Calu3 (cell line): ENCODE measurements at regions of chr10 and their contacts with region 1.

Region 1: GRCh38 chr10:124741281-124741921 is 2.8 kb downstream of the FAM53B start:
- DNase-seq: peak; percentile 70
- H3K4me3 Mint-ChIP-seq: peak overlapping the region; percentile 51
- H3K27ac Mint-ChIP-seq: peak overlapping the region; percentile 26
- H3K4me1 Mint-ChIP-seq: peaks cover 29% of the 10 kb centered on the region
- H3K27me3 Mint-ChIP-seq: no peaks in the 10 kb centered on the region
- CTCF ChIP-seq: peak; percentile 73

Region 2: DNA sequence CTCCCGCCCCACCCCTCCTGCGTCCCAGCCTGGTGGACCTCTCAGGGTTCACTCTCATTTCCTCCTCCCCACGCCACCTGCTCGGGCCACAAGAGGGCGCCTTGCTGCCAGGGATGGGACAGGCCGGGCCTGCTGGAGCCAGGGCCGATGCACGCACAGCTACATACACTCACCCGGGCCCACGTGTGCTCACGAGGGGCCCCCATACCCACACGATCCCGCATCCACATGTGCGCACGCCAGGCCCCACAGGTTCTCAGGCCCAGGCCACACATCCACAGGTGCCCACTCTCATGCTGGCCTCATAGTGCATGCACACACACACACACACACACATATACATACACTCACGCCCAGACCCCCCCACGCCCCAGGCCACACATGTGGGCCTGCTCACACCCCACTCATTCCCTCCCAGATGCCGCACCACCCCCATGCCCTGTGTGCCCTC is 211.2 kb before region 1 on chr10:
- CTCF ChIA-PET with region 1: interaction called, 14 read pairs
- intact Hi-C with region 1: loop called (anchors 2 kb)
- DNase-seq: peak; percentile 85
- H3K4me3 Mint-ChIP-seq: no peak overlapping the region
- H3K27ac Mint-ChIP-seq: no peak overlapping the region
- H3K4me1 Mint-ChIP-seq: peaks cover 2% of the 10 kb centered on the region
- H3K27me3 Mint-ChIP-seq: no peaks in the 10 kb centered on the region
- CTCF ChIP-seq: peak; percentile 61

Region 3: DNA sequence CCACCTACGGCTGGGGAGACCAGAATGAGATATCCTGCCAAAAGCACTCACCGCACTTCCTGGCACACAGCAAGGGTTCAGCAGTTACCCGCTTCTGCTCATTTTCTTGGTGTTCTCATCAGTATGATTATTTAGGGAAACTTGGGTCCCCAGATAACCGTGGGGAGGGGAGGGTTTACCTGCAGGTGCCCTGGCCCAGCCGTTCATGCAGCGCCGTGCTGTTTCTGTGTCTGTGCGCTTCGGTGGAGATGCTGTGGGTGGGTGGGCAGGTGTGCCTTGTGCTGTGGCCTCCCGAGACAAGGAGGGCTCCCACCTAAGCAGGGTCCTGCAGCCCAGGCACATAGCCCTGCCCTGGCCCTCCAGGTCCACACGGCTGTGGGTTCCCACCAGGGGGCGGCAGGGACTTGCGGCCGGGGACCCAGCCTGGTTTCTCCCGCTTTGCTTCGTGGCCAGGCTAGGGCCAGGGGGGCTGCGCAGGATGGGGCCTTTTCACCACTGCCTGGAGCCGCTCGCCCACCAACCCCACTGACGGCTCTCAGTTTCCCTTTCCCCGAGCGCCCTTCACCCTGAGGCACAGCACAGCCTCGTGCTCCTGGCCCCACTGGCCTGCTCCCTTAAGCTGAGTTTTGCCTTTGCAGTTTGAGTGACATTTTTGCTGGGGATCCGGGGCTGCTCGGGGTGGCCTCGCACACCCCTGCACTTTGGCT is 201.3 kb before region 1 on chr10:
- CTCF ChIA-PET with region 1: interaction called, 9 read pairs
- intact Hi-C with region 1: loop called (anchors 1 kb)
- DNase-seq: peak; percentile 62
- H3K4me3 Mint-ChIP-seq: no peak overlapping the region
- H3K27ac Mint-ChIP-seq: no peak overlapping the region
- H3K4me1 Mint-ChIP-seq: no peaks in the 10 kb centered on the region
- H3K27me3 Mint-ChIP-seq: no peaks in the 10 kb centered on the region
- CTCF ChIP-seq: peak; percentile 51

Region 4: DNA sequence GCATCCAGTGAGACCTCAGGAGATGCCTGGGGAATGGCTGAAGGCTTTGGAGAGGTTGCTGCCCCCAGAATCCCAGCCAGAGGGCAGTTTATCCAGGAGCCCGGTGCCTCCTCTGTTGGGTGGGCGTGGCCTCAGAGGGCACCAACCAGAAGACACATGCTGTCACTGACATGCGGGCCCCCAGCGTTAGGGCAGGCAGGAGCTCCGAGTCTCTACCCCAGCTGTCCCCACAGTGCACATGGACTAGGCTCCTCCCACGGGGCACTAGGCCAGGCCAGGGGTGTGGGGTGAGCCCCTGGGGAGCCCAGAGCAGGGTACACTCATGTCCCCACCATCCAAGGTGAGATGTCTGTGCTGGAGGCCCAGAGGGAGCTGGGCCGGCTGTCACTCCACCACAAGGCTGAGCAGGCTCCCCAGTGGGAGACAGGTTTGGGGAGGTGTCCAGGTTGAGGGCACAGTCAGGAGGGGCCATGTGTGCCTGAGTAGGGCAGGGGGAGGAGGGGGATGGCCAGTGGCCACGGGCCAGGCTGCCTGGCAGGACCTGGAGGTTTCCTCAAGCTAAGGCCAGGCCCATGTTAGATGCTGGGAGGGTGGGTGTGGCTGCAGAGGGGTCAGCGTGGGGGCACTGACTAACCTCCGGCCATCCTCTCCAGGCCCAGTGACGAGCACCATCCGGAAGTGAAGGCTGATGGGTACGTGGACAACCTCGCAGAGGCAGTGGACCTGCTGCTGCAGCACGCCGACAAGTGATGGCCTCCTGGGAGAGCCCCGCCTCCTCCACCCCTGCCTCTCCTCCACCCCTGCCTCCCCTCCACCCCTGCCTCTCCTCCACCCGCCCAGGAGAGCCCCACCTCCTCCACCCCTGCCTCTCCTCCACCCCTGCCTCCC is 128.5 kb before region 1 on chr10:
- CTCF ChIA-PET with region 1: no interaction called
- intact Hi-C with region 1: loop called (anchors 10 kb)
- DNase-seq: peak; percentile 46
- H3K4me3 Mint-ChIP-seq: no peak overlapping the region
- H3K27ac Mint-ChIP-seq: no peak overlapping the region
- H3K4me1 Mint-ChIP-seq: no peaks in the 10 kb centered on the region
- H3K27me3 Mint-ChIP-seq: no peaks in the 10 kb centered on the region
- CTCF ChIP-seq: no peak

Region 5: DNA sequence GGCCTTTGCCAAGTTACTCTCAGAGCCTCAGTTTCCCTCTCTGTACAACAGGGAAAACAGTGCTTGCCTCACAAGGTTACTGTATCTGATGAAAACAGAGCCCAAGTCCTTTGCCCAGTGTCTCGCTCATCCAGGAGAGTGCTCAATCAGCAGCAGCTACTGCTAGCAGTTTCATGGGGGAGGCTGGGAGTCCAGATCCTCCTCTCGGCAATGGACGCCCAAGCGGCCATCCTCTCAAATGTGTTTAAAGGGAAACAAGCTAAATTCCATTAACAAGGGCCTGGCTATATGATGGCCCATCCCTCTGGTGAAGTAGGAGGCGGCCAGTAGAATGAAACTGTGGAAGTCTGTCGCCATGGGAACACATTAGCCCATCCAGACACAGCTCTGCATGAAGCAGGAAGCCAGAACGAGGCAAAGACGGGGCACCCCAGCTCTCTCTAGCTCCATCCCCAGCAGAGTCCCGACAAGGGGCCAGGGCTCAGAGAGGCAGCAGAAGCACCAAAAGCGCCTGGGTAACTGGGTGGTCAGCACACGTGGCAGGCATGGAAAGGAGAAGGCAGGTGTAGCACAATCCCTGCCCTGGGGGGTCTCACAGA is 32.4 kb before region 1 on chr10:
- CTCF ChIA-PET with region 1: interaction called, 4 read pairs
- intact Hi-C with region 1: loop called (anchors 5 kb)
- DNase-seq: no peak
- H3K4me3 Mint-ChIP-seq: no peak overlapping the region
- H3K27ac Mint-ChIP-seq: no peak overlapping the region
- H3K4me1 Mint-ChIP-seq: peaks cover 33% of the 10 kb centered on the region
- H3K27me3 Mint-ChIP-seq: no peaks in the 10 kb centered on the region
- CTCF ChIP-seq: no peak

Region 6: GRCh38 chr10:124719213-124719851 is 22.1 kb before region 1 on chr10:
- CTCF ChIA-PET with region 1: interaction called, 15 read pairs
- intact Hi-C with region 1: no loop called
- DNase-seq: peak; percentile 70
- H3K4me3 Mint-ChIP-seq: peak overlapping the region; percentile 10
- H3K27ac Mint-ChIP-seq: no peak overlapping the region
- H3K4me1 Mint-ChIP-seq: peaks cover 44% of the 10 kb centered on the region
- H3K27me3 Mint-ChIP-seq: no peaks in the 10 kb centered on the region
- CTCF ChIP-seq: peak; percentile 33